Esophagus squamous epithelium (tissue), 5 donors: ENCODE measurements at regions of chr4 and their contacts with region 1.

Region 1: DNA sequence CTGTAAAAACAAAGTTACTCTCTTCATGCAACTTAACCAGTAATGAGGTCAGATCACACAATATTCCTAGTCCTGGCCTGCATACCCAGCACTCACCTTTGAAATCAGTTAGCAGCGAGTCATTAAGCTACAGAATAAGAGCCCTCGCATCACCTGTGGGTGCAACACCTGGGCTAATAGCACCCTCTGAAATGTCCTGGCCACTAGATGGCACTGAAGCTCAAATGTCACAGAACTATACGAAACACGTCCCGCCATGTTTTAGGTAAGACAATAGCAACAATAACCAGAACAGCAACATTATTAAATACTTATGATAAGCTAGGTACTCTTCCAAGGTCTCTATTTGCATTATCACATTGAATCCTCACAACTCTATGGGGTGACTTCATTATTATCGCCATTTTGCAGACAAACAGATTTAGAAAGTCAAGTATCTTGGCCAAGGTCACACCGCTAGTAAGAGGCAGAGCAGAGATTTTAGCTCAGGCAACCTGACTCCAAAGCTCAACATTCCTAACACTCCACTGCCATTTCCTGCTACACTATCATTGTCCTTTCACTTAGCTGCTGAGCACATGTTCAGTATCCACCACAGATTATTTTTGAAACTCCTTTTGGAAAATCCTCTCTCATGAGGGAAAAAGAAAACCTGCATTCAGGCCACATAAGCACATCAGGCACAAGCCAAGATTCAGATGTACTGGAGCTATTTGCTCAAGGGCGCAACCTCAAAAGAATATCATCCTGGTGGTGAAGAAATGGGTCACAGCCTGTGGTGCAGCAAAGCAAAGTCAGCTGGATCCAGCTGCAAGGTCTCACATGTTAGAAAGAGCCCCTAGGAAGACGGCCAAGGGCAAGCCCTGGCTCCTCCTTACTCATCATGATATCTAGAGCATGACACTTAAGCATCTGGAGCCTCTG is 59.5 kb upstream of the KDR start:
- DNase-seq: no peak
- H3K4me3 ChIP-seq: no peak overlapping the region
- H3K27ac ChIP-seq: peak overlapping the region in 2 of 4 donors; percentile 6 to 59
- H3K4me1 ChIP-seq: peaks cover 0 to 4% (median 0%) of the 10 kb centered on the region in 3 donors
- H3K27me3 ChIP-seq: no peaks in the 10 kb centered on the region
- CTCF ChIP-seq: peak in 4 of 6 experiments; percentile 16 to 55 (median 30)
- POLR2A ChIP-seq: no peak

Region 2: DNA sequence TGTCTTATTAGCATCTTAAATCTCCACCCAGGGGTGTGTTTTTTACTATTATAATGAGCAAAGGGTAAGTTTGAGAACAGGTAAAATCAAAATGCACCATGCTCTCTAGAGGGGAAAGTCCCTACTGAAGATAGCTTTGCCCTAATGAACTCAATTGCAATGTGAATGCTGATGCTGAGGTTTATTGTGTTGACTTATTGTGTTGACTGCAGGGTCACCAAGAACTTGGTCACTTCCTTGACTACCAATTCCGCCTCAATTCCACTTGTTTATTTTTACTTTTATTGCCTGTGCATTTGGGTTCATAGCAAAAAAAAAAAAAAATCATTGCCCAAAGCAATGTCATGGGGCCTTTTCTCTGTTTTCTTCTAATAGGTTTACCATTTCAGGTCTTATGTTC is 93.5 kb after region 1 on chr4:
- intact Hi-C with region 1: loop called (anchors 5 kb)
- DNase-seq: no peak
- H3K4me3 ChIP-seq: no peak overlapping the region
- H3K27ac ChIP-seq: no peak overlapping the region
- H3K4me1 ChIP-seq: no peaks in the 10 kb centered on the region
- H3K27me3 ChIP-seq: no peaks in the 10 kb centered on the region
- CTCF ChIP-seq: no peak
- POLR2A ChIP-seq: no peak